ENCODE measurements at regions of chr2 and their contacts with region 1.

Region 1: DNA sequence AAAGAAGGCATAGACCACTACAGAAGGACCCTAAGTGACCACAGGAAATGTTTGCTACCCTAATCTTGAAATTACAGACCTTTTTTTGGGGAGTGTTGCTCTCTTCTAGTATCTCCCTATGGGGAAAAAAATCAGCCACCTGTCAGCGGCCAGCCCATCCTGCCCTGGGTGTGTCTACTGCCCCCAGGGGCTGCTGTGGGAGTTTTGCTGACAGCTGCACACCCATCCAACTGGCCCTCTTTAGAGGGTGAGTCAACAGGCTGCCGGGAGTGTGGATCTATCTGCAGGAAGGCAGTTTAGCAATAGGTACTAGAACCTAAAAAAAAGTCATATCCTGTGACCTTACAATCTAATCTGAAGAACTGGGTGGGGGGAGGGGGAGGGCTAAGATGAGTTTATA is 796 bp upstream of the DYSF start:
- DNase-seq: peak; percentile 82
- H3K4me3 ChIP-seq: no peak overlapping the region
- H3K27ac ChIP-seq: no peak overlapping the region
- H3K4me1 ChIP-seq: peaks cover 36% of the 10 kb centered on the region
- H3K27me3 ChIP-seq: no peaks in the 10 kb centered on the region
- CTCF ChIP-seq: peak in 1 of 2 donors; percentile 30

Region 2: DNA sequence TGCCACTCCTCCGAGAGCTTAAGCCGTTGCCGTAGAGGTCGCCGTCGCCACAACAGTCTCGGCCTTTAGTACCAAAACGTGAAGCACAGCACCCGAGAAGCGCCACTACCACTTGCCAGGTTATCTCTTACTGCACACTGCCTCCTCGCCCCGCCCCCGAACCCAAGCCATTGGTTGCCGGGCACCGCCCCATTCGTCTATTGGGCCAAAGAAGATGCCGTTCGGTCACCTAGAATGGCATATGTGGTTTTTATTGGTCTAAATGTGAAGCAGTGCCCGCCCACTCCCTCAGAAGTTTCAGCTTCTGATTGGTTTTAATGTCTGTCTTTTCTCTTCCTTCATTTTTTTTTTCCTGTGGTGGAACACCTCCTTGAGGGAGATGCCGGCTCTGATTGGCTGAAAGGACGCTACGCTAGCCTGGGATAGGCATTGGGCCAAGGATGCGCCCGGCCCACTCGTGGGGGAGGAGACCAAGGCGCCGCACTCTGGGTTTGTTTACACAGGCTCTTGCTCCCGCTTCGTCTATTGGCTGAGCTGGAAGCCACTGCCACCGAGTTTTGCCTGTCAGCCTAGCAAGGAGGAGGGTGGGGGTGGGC is 225.5 kb before region 1 on chr2 and contains the start of gene PAIP2B:
- CTCF ChIA-PET with region 1: no interaction called
- dilution Hi-C with region 1: no loop called
- in situ Hi-C with region 1: no loop called
- intact Hi-C with region 1: loop called (anchors 5 kb)
- DNase-seq: peak; percentile 100
- H3K4me3 ChIP-seq: peak within 1 kb of the TSS; percentile 83 to 92 (median 84)
- H3K27ac ChIP-seq: peak within 1 kb of the TSS; percentile 19
- H3K4me1 ChIP-seq: peaks cover 9% of the 10 kb centered on the region
- H3K27me3 ChIP-seq: peaks cover 3% of the 10 kb centered on the region
- CTCF ChIP-seq: no peak
- total RNA-seq, gene PAIP2B: 2.0 to 2.1 TPM

Region 3: DNA sequence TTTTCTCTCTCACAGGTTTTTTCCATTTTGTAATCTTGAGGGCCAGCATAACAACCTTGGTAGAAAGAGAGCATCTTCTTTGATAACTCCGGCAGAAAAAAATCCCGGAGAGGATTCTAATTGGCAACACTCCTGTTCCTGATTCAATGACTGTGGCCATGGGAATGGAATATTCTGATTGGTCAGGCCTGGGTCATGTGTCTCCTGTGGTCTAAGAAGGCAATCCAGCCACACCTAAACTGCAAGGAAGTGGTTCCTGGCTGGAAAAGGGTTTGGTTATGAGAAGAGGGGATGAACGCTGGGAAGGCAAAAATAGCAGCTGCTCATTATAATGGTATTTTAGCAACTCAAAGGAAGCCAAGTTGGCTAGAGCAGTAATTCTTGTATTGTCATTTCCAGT is 145.8 kb before region 1 on chr2:
- CTCF ChIA-PET with region 1: no interaction called
- dilution Hi-C with region 1: no loop called
- in situ Hi-C with region 1: no loop called
- intact Hi-C with region 1: loop called (anchors 5 kb)
- DNase-seq: peak; percentile 38
- H3K4me3 ChIP-seq: no peak overlapping the region
- H3K27ac ChIP-seq: no peak overlapping the region
- H3K4me1 ChIP-seq: peaks cover 16% of the 10 kb centered on the region
- H3K27me3 ChIP-seq: no peaks in the 10 kb centered on the region
- CTCF ChIP-seq: no peak

Measured in mammary epithelial cell (primary cell).